Colonic mucosa (tissue), 4 donors: ENCODE measurements at regions of chr15 and their contacts with region 1.

Region 1: DNA sequence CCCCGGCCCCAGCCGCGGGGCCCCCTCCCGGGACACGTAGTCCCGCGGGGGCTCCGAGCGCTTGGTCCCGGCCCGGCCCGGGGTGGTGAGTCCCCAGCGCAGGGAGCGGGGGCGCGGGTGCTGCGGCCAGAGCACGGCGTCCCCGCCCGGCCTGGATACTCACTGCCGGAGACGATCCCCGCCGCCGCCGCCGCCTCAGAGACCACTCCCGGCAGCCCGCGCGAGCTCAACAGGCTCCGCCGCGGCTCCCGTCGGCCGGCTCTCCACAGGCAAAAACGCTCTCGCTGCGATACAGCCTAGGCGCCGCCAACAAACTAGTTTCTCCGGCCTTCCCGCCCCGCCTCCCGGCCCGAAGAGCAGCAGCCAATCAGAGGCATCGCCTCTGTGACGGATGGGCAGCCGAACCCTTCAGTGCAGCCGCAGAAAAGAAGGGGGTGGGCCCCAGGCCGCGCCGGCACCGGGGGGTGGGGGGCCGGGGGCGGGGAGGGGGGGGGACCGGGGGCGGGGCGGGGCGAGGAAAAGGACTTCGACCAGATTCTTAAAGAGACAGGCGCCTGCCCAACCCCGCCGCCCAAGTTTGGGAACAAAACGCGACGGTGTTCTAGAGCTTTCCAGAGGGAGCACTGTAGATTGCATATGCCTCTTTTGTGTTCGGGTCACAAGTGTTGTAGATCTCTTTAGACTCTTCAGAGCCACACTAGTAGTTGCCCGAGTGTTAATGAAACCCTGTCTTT is at the start of gene KLHL25:
- DNase-seq: peak; percentile 94
- H3K4me3 ChIP-seq: peak within 1 kb of the TSS; percentile 96
- H3K27ac ChIP-seq: peak within 1 kb of the TSS; percentile 92
- H3K4me1 ChIP-seq: no peaks in the 10 kb centered on the region
- H3K27me3 ChIP-seq: no peaks in the 10 kb centered on the region
- CTCF ChIP-seq: no peak
- total RNA-seq, gene KLHL25: 6.6 to 12.7 TPM

Region 2: DNA sequence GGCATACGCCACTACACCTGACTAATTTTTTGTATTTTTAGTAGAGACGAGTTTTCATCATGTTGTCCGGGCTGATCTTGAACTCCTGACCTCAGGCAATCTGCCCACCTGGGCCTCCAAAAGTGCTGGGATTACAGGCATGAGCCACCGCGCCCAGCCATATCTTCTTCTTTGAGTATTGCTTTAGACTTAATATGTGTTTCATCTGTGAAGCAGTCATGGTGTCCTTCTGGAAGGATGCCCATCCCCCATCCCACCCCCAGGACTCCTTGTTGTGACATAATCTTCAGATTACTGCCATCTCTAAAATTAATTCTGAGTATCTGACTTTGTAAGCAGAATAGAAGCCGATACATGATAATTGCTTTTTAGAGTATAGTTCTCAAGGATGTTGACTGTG is 57.7 kb before region 1 on chr15:
- intact Hi-C with region 1: loop called (anchors 5 kb)
- DNase-seq: no peak
- H3K4me3 ChIP-seq: no peak overlapping the region
- H3K27ac ChIP-seq: no peak overlapping the region
- H3K4me1 ChIP-seq: no peaks in the 10 kb centered on the region
- H3K27me3 ChIP-seq: no peaks in the 10 kb centered on the region
- CTCF ChIP-seq: no peak

Region 3: GRCh38 chr15:85831415-85832113 is 36.8 kb after region 1 on chr15:
- intact Hi-C with region 1: loop called (anchors 5 kb)
- DNase-seq: peak; percentile 76
- H3K4me3 ChIP-seq: no peak overlapping the region
- H3K27ac ChIP-seq: peak overlapping the region; percentile 11
- H3K4me1 ChIP-seq: no peaks in the 10 kb centered on the region
- H3K27me3 ChIP-seq: no peaks in the 10 kb centered on the region
- CTCF ChIP-seq: peak; percentile 45